Ascending aorta (tissue), 2 donors: ENCODE measurements at regions of chr11 and their contacts with region 1.

Region 1: GRCh38 chr11:95150946-95151684 is 61.5 kb downstream of the ENDOD1 start:
- DNase-seq: peak; percentile 60 to 96
- H3K4me3 ChIP-seq: peak overlapping the region; percentile 76 to 88
- H3K27ac ChIP-seq: peak overlapping the region; percentile 89 to 94
- H3K4me1 ChIP-seq: peaks cover 0 to 15% of the 10 kb centered on the region in 2 donors
- H3K27me3 ChIP-seq: no peaks in the 10 kb centered on the region
- CTCF ChIP-seq: peak; percentile 71 to 95 (median 83)

Region 2: GRCh38 chr11:94973099-94973968 is 177.8 kb before region 1 on chr11 and contains the starts of genes CWC15 and KDM4D:
- intact Hi-C with region 1: loop called (anchors 2 kb)
- DNase-seq: peak; percentile 86 to 96
- H3K4me3 ChIP-seq: peak within 1 kb of the TSS; percentile 69 to 96
- H3K27ac ChIP-seq: peak within 1 kb of the TSS; percentile 76 to 82
- H3K4me1 ChIP-seq: peaks cover 0 to 8% of the 10 kb centered on the region in 2 donors
- H3K27me3 ChIP-seq: no peaks in the 10 kb centered on the region
- CTCF ChIP-seq: no peak
- total RNA-seq, gene CWC15: 16.2 TPM
- total RNA-seq, gene KDM4D: not detected

Region 3: GRCh38 chr11:95067039-95067840 is 83.9 kb before region 1 on chr11:
- intact Hi-C with region 1: loop called (anchors 1 kb)
- DNase-seq: peak in 1 of 2 donors; percentile 93
- H3K4me3 ChIP-seq: peak overlapping the region; percentile 88 to 95
- H3K27ac ChIP-seq: peak overlapping the region; percentile 98 to 99
- H3K4me1 ChIP-seq: peaks cover 0 to 14% of the 10 kb centered on the region in 2 donors
- H3K27me3 ChIP-seq: no peaks in the 10 kb centered on the region
- CTCF ChIP-seq: peak; percentile 71 to 78 (median 73)

Region 4: GRCh38 chr11:95279921-95280868 is 129.1 kb after region 1 on chr11:
- intact Hi-C with region 1: no loop called
- DNase-seq: peak in 1 of 2 donors; percentile 65
- H3K4me3 ChIP-seq: peak overlapping the region in 1 of 2 donors; percentile 23
- H3K27ac ChIP-seq: peak overlapping the region in 1 of 2 donors; percentile 65
- H3K4me1 ChIP-seq: peaks cover 0 to 4% of the 10 kb centered on the region in 2 donors
- H3K27me3 ChIP-seq: no peaks in the 10 kb centered on the region
- CTCF ChIP-seq: no peak

Region 5: DNA sequence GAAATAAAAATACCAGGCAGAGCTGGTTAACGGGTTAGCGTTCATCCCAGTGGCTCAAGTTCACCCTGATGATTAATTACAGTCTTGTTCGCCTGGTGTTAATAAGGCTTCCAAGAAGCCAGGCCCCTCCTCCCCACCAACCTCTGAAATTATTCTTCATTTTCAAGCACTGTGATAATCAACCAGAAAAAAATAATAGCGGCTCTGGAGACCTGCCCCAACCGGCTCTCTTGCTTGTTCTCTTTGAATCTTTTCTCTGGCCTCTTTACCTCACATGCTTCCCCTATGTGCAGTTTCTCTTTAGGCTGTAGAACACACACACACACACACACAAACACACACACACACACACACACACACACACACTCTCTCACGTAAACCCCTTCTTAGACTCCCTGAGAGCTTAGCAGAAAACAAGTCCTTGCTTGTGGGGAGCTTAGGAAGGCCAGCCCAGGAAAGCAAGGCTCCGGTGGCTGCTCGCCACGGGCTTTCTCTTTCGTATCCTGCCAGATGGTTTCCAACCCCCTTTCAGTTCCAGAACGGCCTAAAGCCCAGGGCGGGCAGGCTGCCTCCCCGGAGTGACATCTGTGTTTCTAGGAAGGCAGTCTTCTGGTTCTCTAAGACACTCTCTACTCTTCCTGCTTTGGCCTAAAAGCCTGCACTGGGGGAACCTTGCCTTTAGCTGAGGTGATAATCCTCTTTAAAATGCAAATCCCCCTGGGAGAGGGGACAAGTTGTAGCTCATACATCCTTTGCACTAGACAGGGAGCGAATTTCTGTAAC is 186.3 kb after region 1 on chr11:
- intact Hi-C with region 1: loop called (anchors 10 kb)
- DNase-seq: peak in 1 of 2 donors; percentile 71
- H3K4me3 ChIP-seq: peak overlapping the region in 1 of 2 donors; percentile 46
- H3K27ac ChIP-seq: peak overlapping the region; percentile 77 to 88
- H3K4me1 ChIP-seq: peaks cover 7 to 28% of the 10 kb centered on the region in 2 donors
- H3K27me3 ChIP-seq: no peaks in the 10 kb centered on the region
- CTCF ChIP-seq: no peak

Region 6: DNA sequence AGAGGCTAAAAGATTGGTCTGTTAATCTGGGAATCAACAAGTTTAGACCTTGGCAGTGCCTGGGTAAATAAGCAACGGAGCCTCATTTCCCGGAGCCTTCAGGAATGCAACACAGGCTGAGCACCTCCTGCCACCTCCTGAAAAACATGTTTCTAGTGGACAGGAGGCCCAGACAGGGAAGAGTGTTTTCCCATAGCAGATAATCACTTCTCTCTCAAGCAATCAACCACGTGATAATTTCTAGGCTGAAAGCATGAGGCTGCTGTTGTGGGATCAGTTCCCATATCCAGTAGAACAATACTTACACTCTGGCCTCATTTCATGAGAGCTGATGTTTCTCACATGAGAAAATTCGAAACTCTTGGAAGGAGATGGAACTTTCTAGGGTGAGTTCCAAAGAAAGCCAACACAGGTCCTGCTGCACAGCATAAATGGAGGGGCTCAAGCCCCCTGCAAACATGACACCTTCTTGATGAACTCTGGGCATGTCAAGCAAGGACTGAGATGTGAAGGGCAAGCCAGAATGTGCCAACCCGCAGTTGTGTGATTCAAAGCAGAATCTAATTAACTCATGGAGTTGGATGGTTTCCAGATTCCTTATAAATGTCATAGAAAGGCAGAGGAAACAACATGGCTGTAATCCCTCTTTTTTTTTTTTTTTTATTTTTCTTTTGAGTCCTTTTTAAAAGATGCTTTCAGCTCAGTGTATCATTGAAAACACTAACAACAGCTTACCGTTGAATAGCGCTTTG is 308.4 kb after region 1 on chr11:
- intact Hi-C with region 1: loop called (anchors 5 kb)
- DNase-seq: no peak
- H3K4me3 ChIP-seq: no peak overlapping the region
- H3K27ac ChIP-seq: peak overlapping the region; percentile 12 to 39
- H3K4me1 ChIP-seq: peaks cover 0 to 12% of the 10 kb centered on the region in 2 donors
- H3K27me3 ChIP-seq: no peaks in the 10 kb centered on the region
- CTCF ChIP-seq: no peak

Region 7: GRCh38 chr11:95705485-95706124 is 554.5 kb after region 1 on chr11:
- intact Hi-C with region 1: loop called (anchors 1 kb)
- DNase-seq: peak; percentile 51 to 94
- H3K4me3 ChIP-seq: no peak overlapping the region
- H3K27ac ChIP-seq: peak overlapping the region; percentile 60 to 63
- H3K4me1 ChIP-seq: peaks cover 0 to 8% of the 10 kb centered on the region in 2 donors
- H3K27me3 ChIP-seq: no peaks in the 10 kb centered on the region
- CTCF ChIP-seq: peak; percentile 89 to 96 (median 96)

Region 8: DNA sequence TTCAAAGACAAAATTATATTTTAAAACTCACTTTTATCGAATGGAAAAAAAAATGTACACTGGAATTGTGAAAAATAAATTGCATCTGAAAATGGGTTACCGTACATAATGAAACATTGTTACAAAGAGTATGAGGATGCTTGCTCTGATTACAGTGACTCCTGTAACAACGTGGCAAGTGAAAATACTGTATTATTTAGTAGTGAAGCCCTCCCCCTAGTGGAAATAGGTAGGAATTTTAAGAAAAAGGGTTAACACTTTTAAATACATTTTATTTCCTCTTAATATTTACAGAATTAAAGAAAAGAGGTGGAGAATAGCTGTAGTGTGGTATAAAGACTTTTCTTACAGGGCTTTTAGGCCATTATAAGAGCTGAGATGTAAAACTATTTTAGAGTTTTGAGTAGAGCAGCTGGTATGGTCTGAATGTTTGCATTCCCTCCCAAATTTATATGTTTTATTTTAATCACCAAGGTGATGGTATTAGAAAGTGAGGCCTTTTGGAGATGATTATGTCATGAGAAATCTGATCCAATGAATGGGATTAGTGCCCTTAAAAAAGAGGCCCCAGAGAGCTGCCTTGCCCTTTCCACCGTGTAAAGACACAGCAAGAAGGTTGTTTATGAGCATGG is 613.3 kb after region 1 on chr11:
- intact Hi-C with region 1: loop called (anchors 1 kb)
- DNase-seq: no peak
- H3K4me3 ChIP-seq: no peak overlapping the region
- H3K27ac ChIP-seq: no peak overlapping the region
- H3K4me1 ChIP-seq: no peaks in the 10 kb centered on the region
- H3K27me3 ChIP-seq: no peaks in the 10 kb centered on the region
- CTCF ChIP-seq: peak; percentile 47 to 69 (median 59)